ENCODE measurements at regions of chr12 and their contacts with region 1.

Region 1: DNA sequence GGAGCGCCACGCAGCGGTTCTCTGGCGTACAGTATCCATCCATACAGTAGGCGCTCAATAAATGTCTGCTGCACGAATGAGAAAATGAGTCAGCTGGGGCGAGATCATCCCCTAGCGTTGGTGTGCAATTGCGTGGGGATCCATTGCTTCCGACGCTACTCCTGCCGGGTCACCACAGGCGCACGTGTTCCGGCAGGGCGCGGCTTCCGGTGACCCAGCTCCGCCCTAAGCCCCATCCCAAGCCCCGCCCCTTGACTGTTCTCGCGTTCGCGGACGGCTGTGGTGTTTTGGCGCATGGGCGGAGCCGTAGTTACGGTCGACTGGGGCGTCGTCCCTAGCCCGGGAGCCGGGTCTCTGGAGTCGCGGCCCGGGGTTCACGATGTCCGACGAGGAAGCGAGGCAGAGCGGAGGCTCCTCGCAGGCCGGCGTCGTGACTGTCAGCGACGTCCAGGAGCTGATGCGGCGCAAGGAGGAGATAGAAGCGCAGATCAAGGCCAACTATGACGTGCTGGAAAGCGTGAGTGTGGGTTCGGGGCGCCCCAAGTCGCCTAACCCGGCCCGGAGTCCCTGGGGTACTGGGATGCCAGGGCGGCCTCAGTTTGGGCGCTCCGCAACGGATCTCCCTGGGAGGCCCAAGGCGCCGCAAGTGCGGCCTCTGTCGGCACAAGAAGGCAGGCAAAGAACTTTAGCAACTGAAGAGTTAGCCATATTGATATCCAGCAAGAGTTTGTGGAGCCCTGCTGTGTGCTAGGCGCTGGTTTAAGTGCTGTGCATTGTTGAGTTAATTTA is at the start of gene PSMD9:
- DNase-seq: peak; percentile 99
- ATAC-seq: peak; percentile 99
- H3K4me3 ChIP-seq: peak within 1 kb of the TSS; percentile 93
- H3K27ac ChIP-seq: peak within 1 kb of the TSS; percentile 100
- H3K4me1 ChIP-seq: no peaks in the 10 kb centered on the region
- H3K27me3 ChIP-seq: no peaks in the 10 kb centered on the region
- total RNA-seq, gene PSMD9: 33.0 to 35.5 (median 34.0) TPM

Region 2: DNA sequence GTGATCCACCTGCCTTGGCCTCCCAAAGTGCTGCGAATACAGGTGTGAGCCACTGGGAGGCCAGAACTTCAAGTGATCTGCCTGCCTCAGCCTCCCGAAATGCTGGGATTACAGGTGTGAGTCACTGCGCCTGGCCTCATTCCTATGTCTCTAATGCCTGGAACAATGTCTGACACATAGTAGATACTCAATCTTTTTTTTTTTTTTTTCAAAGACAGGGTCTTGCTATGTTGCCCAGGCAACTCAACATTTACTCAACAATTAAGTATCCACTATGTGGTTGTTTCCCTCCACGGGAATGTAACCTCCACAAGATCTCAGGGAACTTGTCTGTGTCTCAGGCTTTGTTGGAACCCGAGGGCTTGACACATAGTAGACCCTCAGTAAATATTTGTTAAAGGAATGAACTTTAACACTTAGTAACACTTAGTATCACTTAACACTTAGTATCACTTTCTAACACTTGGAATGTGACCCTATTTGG is 179.2 kb before region 1 on chr12:
- intact Hi-C with region 1: loop called in 1 of 4 experiments (anchors 10 kb)
- DNase-seq: peak in 1 of 3 donors; percentile 5
- ATAC-seq: no peak
- H3K4me3 ChIP-seq: no peak overlapping the region
- H3K27ac ChIP-seq: no peak overlapping the region
- H3K4me1 ChIP-seq: peaks cover 4% of the 10 kb centered on the region
- H3K27me3 ChIP-seq: no peaks in the 10 kb centered on the region

Region 3: GRCh38 chr12:121793838-121794533 is 94.7 kb before region 1 on chr12:
- intact Hi-C with region 1: loop called in 3 of 4 experiments (anchors 5 kb)
- DNase-seq: peak; percentile 93 to 97 (median 97)
- ATAC-seq: peak; percentile 68 to 75
- H3K4me3 ChIP-seq: peak overlapping the region; percentile 20
- H3K27ac ChIP-seq: peak overlapping the region; percentile 65
- H3K4me1 ChIP-seq: peaks cover 7% of the 10 kb centered on the region
- H3K27me3 ChIP-seq: no peaks in the 10 kb centered on the region

Region 4: DNA sequence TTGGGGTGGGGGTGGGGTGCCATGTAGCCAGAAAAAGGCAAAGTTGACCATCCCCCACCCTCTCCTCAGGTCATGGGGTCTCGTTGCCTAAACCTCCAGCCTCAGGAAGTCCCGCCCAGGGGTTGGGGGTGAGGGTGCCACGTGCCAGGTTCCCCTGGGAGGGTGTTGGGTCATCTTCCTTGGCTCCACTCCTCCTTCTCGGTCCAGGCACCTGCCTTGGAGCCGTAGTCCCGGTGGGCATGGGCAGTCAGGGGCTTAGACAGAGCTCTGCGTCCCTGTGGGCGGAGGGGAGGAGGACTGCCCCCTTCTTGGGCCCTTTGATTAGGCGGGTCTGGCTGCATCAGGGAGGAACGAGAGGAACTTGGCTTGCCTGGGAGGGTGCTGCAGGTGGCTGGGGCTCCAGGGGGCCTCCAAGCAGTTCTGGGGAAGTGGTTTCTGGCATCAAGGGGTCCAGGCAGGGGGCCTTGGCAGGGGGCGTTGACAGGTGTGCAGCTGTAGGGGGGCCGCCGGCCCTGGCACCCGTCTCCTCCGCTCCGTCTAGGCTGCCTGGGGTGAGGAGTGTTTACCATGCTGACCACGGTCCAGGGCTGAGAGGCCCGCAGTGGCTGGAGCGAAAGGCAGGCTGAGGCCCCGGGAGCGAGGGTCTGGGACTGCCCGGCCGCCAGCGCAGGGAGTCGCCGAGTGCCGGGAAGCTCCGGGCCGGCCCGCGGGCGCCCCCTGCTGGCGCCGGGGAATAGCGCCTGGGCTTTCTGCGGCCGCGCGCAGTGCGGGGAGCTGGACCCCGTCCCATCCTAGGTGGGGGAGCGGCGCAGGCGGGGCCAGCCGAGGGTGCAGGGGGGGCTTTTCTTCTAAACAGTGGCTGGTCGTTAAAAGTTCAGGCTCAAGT is 77.0 kb before region 1 on chr12:
- intact Hi-C with region 1: loop called in 1 of 4 experiments (anchors 10 kb)
- DNase-seq: peak; percentile 80 to 92 (median 89)
- ATAC-seq: peak; percentile 87 to 90
- H3K4me3 ChIP-seq: peak overlapping the region; percentile 57
- H3K27ac ChIP-seq: peak overlapping the region; percentile 40
- H3K4me1 ChIP-seq: peaks cover 11% of the 10 kb centered on the region
- H3K27me3 ChIP-seq: no peaks in the 10 kb centered on the region

Region 5: DNA sequence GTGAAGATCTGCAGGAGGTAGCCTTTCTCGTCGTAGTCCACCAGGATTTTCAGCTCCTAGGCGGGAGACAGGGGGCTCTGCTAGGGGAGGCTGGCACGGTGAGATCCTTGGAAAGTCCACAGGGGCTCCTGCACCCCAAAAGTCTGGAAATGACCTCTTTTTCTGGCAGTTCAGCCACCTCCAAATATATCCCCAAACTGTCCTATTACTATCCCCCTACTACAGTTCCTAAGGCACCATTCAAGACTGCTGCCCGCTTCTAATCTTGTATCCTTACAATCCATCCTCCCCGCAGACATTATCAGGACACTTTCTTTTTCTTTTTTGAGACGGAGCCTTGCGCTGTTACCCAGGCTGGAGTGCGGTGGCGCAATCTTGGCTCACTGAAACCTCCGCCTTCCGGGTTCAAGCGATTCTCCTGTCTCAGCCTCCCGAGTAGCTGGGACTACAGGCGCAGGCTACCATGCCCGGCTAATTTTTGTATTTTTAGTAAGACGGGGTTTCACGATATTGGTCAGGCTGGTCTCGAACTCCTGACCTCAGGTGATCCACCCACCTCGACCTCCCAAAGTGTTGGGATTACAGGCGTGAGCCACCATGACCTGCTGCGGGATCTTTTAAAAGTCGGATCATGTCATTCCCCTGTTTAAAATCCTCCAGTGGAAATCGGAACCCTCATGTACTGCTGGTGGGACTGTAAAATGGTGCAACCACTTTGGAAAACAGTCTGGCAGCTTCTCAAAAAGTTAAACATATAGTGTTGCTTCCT is 48.5 kb before region 1 on chr12:
- intact Hi-C with region 1: loop called in 1 of 4 experiments (anchors 5 kb)
- DNase-seq: peak in 1 of 3 donors; percentile 18
- ATAC-seq: no peak
- H3K4me3 ChIP-seq: peak overlapping the region; percentile 65
- H3K27ac ChIP-seq: peak overlapping the region; percentile 67
- H3K4me1 ChIP-seq: no peaks in the 10 kb centered on the region
- H3K27me3 ChIP-seq: no peaks in the 10 kb centered on the region

Measured in right cardiac atrium (tissue), 5 donors.